PC-3 (cell line): ENCODE measurements at regions of chr5 and their contacts with region 1.

Region 1: GRCh38 chr5:139787568-139788293 is 7.9 kb upstream of the PSD2 start:
- DNase-seq: peak; percentile 85
- ATAC-seq: peak; percentile 92
- H3K4me3 ChIP-seq: peak overlapping the region; percentile 68
- H3K27ac ChIP-seq: no peak overlapping the region
- H3K4me1 ChIP-seq: no peaks in the 10 kb centered on the region
- H3K27me3 ChIP-seq: no peaks in the 10 kb centered on the region
- CTCF ChIP-seq: peak; percentile 87

Region 2: DNA sequence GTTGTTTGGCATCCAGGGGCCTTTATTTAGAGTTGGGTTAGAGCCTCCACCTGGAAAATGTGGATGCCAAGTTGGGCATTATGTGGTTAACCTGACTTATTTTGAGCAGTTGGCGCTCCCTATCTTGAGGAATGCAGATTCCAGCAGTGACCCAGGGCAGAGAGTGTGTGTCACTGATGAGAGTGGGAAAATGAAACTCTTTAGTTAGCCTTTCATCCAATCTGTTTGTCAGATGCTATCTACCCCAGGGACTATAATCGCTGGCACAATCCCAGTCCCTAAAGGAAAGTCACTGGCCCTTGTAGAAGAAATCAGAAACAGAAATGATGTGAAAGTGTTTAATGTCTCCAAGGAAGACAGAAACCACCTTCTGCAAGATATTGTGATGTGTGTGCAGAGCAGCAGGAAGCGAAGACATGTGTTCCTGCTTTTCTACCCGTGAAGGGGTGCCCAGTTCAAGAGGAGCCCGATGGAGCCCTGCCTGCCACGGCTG is 295.0 kb before region 1 on chr5:
- CTCF ChIA-PET with region 1: no interaction called
- POLR2A ChIA-PET with region 1: no interaction called
- intact Hi-C with region 1: no loop called
- DNase-seq: peak; percentile 32
- ATAC-seq: no peak
- H3K4me3 ChIP-seq: no peak overlapping the region
- H3K27ac ChIP-seq: no peak overlapping the region
- H3K4me1 ChIP-seq: peaks cover 31% of the 10 kb centered on the region
- H3K27me3 ChIP-seq: no peaks in the 10 kb centered on the region
- CTCF ChIP-seq: no peak

Region 3: GRCh38 chr5:139838423-139839065 is 50.8 kb after region 1 on chr5:
- CTCF ChIA-PET with region 1: interaction called, 16 read pairs
- POLR2A ChIA-PET with region 1: no interaction called
- intact Hi-C with region 1: no loop called
- DNase-seq: no peak
- ATAC-seq: no peak
- H3K4me3 ChIP-seq: no peak overlapping the region
- H3K27ac ChIP-seq: no peak overlapping the region
- H3K4me1 ChIP-seq: no peaks in the 10 kb centered on the region
- H3K27me3 ChIP-seq: 0 out of 2 replicates have a peak, but pooled peaks cover 4% of the 10 kb centered on the region
- CTCF ChIP-seq: no peak

Region 4: DNA sequence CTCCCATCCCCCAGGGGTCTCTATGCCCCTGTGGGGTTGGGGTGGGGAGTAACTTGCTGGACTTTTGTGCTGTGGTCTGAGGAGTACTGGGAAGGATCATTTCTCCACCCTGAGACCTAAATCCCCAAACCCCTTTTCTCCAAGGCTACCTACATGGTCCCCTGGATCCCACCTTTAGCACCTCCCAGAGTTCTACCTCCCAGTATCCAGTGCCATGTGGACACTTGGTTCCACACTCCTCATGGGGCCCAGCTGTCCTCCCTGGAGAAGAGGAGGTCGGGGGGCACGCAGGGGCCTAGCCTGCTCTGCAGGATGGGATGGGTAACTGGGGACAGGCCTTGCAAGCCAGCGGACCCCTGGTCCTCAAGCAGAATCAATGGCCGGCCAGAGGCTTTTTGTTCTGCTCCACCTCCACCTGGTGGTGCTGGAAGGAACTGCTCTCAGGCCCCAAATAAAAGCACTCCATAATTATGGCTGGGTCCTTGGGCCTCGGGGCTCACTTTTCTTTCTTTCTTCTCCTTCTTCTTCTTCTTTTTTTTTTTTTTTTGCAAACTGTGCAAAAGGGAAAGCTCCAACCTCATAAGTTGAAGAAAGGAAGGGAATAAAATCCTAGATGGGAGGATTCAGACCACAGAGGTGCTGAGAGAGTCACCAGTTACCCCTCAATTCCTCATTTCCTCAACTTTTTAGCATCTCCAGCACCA is 76.3 kb after region 1 on chr5:
- CTCF ChIA-PET with region 1: no interaction called
- POLR2A ChIA-PET with region 1: no interaction called
- intact Hi-C with region 1: loop called (anchors 2 kb)
- DNase-seq: peak; percentile 64
- ATAC-seq: peak; percentile 64
- H3K4me3 ChIP-seq: no peak overlapping the region
- H3K27ac ChIP-seq: no peak overlapping the region
- H3K4me1 ChIP-seq: peaks cover 5% of the 10 kb centered on the region; the same call in 1 of the 2 replicates
- H3K27me3 ChIP-seq: no peaks in the 10 kb centered on the region
- CTCF ChIP-seq: peak; percentile 76

Region 5: DNA sequence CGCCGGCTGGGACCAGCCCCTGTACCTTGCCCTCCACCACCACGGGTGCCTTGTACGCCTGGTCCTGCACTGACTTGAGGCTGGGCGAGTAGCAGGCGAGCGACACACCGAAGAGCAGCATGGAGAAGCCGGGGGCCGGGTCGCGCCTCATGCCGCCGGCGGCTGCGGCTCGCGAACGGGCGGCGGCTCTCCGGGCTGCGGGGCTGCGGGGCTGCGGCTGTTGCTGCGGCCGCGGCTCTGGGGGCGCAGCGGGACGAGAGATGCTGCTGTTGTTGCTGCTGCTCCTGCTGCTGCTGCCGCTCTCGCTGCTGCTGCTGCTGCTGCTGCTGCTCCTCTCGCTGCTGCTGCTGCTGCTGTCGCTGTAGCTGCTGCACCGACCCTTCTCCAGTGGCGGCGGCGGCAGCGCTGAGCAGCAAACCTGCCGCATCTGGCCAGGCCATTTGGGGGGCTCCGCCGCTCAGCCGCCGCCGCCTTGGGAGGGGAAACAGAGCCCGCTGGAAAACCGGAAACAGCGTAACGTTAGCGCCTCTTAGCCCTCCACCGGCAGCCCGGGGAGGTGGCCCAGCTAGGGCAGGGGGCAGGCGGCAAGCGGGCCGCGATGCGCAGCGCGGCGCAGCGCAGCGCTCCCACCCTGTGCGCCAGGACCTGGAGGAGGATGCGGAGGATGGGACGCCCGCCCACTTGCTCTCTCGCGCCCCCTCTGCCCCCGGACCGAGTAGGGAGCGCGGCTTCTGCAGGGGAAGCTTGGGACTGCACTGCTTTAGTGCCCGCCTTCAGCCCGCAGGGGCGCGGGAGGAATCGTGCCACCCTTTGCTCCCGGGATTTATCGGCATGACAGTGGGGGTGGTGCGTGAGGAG is 255.1 kb after region 1 on chr5 and contains the start of gene NRG2:
- CTCF ChIA-PET with region 1: no interaction called
- POLR2A ChIA-PET with region 1: no interaction called
- intact Hi-C with region 1: loop called (anchors 5 kb)
- DNase-seq: peak; percentile 53
- ATAC-seq: peak; percentile 58
- H3K4me3 ChIP-seq: peak within 1 kb of the TSS; percentile 86
- H3K27ac ChIP-seq: 0 out of 2 replicates have a peak within 1 kb of the TSS, but pooled peaks have one; percentile 16
- H3K4me1 ChIP-seq: peaks cover 25% of the 10 kb centered on the region
- H3K27me3 ChIP-seq: no peaks in the 10 kb centered on the region
- CTCF ChIP-seq: peak; percentile 56
- total RNA-seq, gene NRG2: 1.8 and 3.2 TPM in 2 replicates